CD8-positive, alpha-beta memory T cell (primary cell): ENCODE measurements at regions of chr14 and their contacts with region 1.

Region 1: GRCh38 chr14:89720741-89721315 is 233.7 kb downstream of the EFCAB11 start:
- DNase-seq: peak; percentile 62 to 92 (median 89)
- H3K4me3 ChIP-seq: peak overlapping the region; percentile 27
- H3K4me3 Mint-ChIP-seq: peak overlapping the region; percentile 21 to 81 (median 72)
- H3K27ac ChIP-seq: peak overlapping the region; percentile 54
- H3K27ac Mint-ChIP-seq: peak overlapping the region; percentile 89 to 100 (median 97)
- H3K4me1 ChIP-seq: peaks cover 82% of the 10 kb centered on the region
- H3K4me1 Mint-ChIP-seq: peaks cover 83 to 96% (median 93%) of the 10 kb centered on the region in 3 donors
- H3K27me3 ChIP-seq: no peaks in the 10 kb centered on the region
- H3K27me3 Mint-ChIP-seq: no peaks in the 10 kb centered on the region

Region 2: DNA sequence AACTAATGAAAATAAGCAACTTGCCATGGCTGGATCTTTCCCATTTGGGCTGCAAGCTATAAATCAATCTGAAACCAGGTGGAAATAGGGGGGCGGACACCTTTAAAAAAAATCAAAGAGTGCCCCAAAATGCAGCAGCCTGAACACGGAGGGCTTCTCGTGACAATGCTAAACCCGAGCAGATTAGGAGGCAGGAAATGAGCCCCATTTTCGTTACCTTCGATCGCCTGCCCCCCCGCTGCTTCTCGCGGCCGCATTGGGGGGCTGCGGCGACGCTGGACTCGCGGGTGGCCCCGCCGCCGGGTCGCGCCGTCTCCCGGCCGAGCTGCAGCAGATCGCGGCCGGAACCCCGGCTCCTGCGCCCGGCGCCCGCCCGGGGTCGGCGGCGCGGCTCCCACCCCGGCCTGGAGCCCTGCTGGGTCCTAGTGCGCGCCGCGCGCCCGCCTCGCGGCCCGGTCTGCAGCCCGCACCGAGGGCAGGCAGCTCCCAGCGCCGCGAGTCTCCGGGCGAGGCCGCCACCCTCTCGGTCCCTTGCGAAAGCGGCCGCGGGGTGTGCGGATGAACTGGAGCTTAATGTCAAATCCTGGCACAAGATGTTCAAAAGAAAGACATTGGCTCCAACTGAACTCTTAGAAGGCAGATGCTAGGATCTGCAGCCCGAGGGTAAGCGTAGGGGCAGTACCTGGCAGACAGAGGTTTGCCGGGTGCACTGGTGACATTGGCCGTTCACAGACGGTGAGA is 101.8 kb before region 1 on chr14:
- CTCF ChIA-PET with region 1: interaction called, 10 read pairs
- POLR2A ChIA-PET with region 1: interaction called, 17 read pairs
- DNase-seq: peak; percentile 47 to 84 (median 76)
- H3K4me3 ChIP-seq: peak overlapping the region; percentile 82
- H3K4me3 Mint-ChIP-seq: peak overlapping the region; percentile 94 to 98 (median 96)
- H3K27ac ChIP-seq: peak overlapping the region; percentile 88
- H3K27ac Mint-ChIP-seq: peak overlapping the region; percentile 93 to 99 (median 96)
- H3K4me1 ChIP-seq: peaks cover 56% of the 10 kb centered on the region
- H3K4me1 Mint-ChIP-seq: peaks cover 66 to 70% (median 69%) of the 10 kb centered on the region in 3 donors
- H3K27me3 ChIP-seq: no peaks in the 10 kb centered on the region
- H3K27me3 Mint-ChIP-seq: no peaks in the 10 kb centered on the region

Region 3: DNA sequence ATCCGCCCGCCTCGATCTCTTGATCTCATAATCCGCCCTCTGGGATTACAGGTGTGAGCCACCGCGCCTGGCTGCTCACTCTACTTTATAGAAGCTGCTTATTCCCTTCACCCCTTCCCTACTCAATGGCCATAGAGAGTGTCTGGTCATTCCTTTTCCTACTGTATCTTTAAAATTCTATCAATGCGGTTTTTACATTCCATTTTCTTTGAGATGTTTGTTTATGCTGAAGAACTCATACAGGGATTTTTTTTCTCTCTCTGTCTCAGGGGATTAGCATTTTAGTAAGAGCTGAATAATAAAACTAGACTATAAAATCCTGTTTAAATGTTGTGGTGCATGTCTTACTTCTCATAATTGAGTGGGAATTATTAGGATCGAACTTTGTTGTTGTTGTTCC is 85.2 kb before region 1 on chr14:
- CTCF ChIA-PET with region 1: no interaction called
- POLR2A ChIA-PET with region 1: no interaction called
- DNase-seq: no peak
- H3K4me3 ChIP-seq: no peak overlapping the region
- H3K4me3 Mint-ChIP-seq: no peak overlapping the region
- H3K27ac ChIP-seq: no peak overlapping the region
- H3K27ac Mint-ChIP-seq: no peak overlapping the region
- H3K4me1 ChIP-seq: peaks cover 36% of the 10 kb centered on the region
- H3K4me1 Mint-ChIP-seq: peaks cover 28 to 42% (median 42%) of the 10 kb centered on the region in 3 donors
- H3K27me3 ChIP-seq: no peaks in the 10 kb centered on the region
- H3K27me3 Mint-ChIP-seq: peaks cover 0 to 1% of the 10 kb centered on the region in 2 donors

Region 4: GRCh38 chr14:89701211-89702043 is 19.4 kb before region 1 on chr14:
- CTCF ChIA-PET with region 1: interaction called, 16 read pairs
- POLR2A ChIA-PET with region 1: interaction called, 11 read pairs
- DNase-seq: peak; percentile 78 to 92 (median 80)
- H3K4me3 ChIP-seq: peak overlapping the region; percentile 68
- H3K4me3 Mint-ChIP-seq: peak overlapping the region; percentile 81 to 90 (median 84)
- H3K27ac ChIP-seq: peak overlapping the region; percentile 32
- H3K27ac Mint-ChIP-seq: peak overlapping the region; percentile 61 to 98 (median 90)
- H3K4me1 ChIP-seq: peaks cover 28% of the 10 kb centered on the region
- H3K4me1 Mint-ChIP-seq: peaks cover 25 to 47% (median 41%) of the 10 kb centered on the region in 3 donors
- H3K27me3 ChIP-seq: no peaks in the 10 kb centered on the region
- H3K27me3 Mint-ChIP-seq: no peaks in the 10 kb centered on the region

Region 5: DNA sequence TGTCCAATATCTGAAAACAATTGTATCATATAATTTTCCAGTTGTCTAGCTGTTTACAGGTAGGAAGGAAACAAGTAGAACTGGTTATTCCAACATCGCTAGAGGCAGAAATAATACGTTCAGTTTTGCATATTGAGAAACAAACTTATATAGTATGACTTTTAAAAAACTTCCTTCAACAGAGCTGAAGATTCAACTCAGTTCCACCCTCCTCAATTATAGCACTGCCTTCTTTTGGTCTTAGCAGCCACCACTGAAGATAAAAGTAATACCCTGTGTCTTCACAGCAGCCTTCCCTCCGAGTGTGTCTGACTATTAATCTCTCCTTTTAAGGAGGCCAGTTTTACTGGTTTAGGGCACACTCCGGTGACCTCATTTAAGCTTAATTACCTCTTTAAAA is 19.5 kb after region 1 on chr14:
- CTCF ChIA-PET with region 1: no interaction called
- POLR2A ChIA-PET with region 1: no interaction called
- DNase-seq: no peak
- H3K4me3 ChIP-seq: no peak overlapping the region
- H3K4me3 Mint-ChIP-seq: no peak overlapping the region
- H3K27ac ChIP-seq: no peak overlapping the region
- H3K27ac Mint-ChIP-seq: no peak overlapping the region
- H3K4me1 ChIP-seq: no peaks in the 10 kb centered on the region
- H3K4me1 Mint-ChIP-seq: no peaks in the 10 kb centered on the region
- H3K27me3 ChIP-seq: no peaks in the 10 kb centered on the region
- H3K27me3 Mint-ChIP-seq: no peaks in the 10 kb centered on the region

Region 6: DNA sequence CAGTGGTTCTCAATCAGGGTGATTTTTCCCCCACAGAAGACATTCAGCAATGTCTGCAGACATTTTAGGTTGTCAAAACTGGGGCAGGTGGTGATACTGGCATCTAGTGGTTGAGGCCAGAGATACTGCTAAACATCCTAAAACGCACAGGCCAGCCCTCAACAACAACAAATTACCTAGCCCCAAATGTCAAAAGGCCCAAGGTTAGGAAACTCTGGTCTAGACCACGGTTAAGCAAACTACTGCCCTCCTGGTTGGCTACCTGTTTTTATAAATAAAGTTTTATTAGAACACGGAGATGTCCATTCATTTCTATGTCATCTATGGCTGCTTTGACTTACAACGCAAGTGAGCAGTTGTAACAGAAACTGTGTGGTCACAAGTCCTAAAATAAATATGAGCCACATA is 47.0 kb after region 1 on chr14:
- CTCF ChIA-PET with region 1: interaction called, 16 read pairs
- POLR2A ChIA-PET with region 1: interaction called, 6 read pairs
- DNase-seq: peak; percentile 27 to 75 (median 63)
- H3K4me3 ChIP-seq: no peak overlapping the region
- H3K4me3 Mint-ChIP-seq: peak overlapping the region in 5 of 7 donors; percentile 1 to 68 (median 36)
- H3K27ac ChIP-seq: no peak overlapping the region
- H3K27ac Mint-ChIP-seq: peak overlapping the region; percentile 3 to 92 (median 76)
- H3K4me1 ChIP-seq: peaks cover 25% of the 10 kb centered on the region
- H3K4me1 Mint-ChIP-seq: peaks cover 33 to 53% (median 34%) of the 10 kb centered on the region in 3 donors
- H3K27me3 ChIP-seq: no peaks in the 10 kb centered on the region
- H3K27me3 Mint-ChIP-seq: no peaks in the 10 kb centered on the region